ENCODE measurements at regions of chr4 and their contacts with region 1.

Region 1: DNA sequence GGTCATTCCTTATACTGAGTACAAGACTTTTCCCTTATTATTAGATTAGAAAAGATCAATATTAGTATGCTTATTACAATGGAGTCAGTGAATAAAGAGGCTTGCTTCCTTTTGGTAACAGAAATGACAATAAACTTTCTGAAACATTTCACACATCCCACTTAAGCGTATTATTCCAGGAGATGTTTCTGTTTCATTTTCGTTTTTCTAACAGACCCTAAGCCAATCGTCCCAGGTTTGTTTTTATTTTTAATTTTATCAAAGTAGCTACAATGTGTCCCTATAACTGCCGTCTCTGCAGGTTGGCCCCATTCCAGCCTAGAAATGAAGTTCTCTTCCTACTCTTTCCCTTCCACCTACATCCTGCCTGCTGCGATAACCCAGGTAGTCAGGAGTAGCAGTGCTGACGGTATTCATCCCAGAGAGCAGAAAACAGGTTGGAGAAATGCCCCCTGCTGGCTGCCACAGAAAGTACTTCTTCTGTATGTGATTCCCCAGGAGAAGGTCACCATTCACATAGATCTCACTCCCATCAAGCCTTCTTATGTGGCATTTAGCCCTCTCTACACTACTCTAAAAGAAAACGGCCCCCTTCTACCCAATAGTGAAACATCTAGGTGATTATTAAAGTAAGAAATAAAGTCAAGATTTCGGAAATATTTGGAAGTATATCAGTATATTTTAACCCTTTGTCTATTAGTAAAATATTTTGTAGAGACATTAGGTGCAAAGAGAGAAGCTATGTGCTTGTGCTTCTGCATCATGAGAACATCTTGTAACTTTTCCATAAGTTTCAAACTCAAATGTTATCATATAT is 40.4 kb downstream of the ENPEP start:
- DNase-seq: peak; percentile 75
- ATAC-seq: peak; percentile 84
- H3K4me3 ChIP-seq: peak overlapping the region; percentile 52 to 72 (median 70)
- H3K4me3 Mint-ChIP-seq: peak overlapping the region; percentile 91
- H3K27ac ChIP-seq: peak overlapping the region in 1 of 2 donors; percentile 50
- H3K27ac Mint-ChIP-seq: no peak overlapping the region
- H3K4me1 ChIP-seq: peaks cover 4 to 9% of the 10 kb centered on the region in 2 donors
- H3K4me1 Mint-ChIP-seq: peaks cover 9% of the 10 kb centered on the region
- H3K27me3 ChIP-seq: peaks cover 0 to 3% (median 0%) of the 10 kb centered on the region in 4 experiments
- H3K27me3 Mint-ChIP-seq: peaks cover under 1% of the 10 kb centered on the region
- CTCF ChIP-seq: peak; percentile 84

Region 2: GRCh38 chr4:109998867-109999584 is 517.3 kb before region 1 on chr4:
- CTCF ChIA-PET with region 1: interaction called, 270 read pairs
- POLR2A ChIA-PET with region 1: no interaction called
- intact Hi-C with region 1: loop called (anchors 1 kb)
- DNase-seq: peak; percentile 76
- ATAC-seq: peak; percentile 47
- H3K4me3 ChIP-seq: no peak overlapping the region
- H3K4me3 Mint-ChIP-seq: no peak overlapping the region
- H3K27ac ChIP-seq: no peak overlapping the region
- H3K27ac Mint-ChIP-seq: no peak overlapping the region
- H3K4me1 ChIP-seq: peaks cover 2 to 5% of the 10 kb centered on the region in 2 donors
- H3K4me1 Mint-ChIP-seq: peaks cover 11% of the 10 kb centered on the region
- H3K27me3 ChIP-seq: no peaks in the 10 kb centered on the region
- H3K27me3 Mint-ChIP-seq: peaks cover 10% of the 10 kb centered on the region
- CTCF ChIP-seq: peak; percentile 81

Region 3: GRCh38 chr4:110005461-110006056 is 510.8 kb before region 1 on chr4:
- CTCF ChIA-PET with region 1: interaction called, 270 read pairs
- POLR2A ChIA-PET with region 1: no interaction called
- intact Hi-C with region 1: loop called (anchors 1 kb)
- DNase-seq: peak; percentile 63
- ATAC-seq: no peak
- H3K4me3 ChIP-seq: no peak overlapping the region
- H3K4me3 Mint-ChIP-seq: no peak overlapping the region
- H3K27ac ChIP-seq: no peak overlapping the region
- H3K27ac Mint-ChIP-seq: no peak overlapping the region
- H3K4me1 ChIP-seq: no peaks in the 10 kb centered on the region
- H3K4me1 Mint-ChIP-seq: no peaks in the 10 kb centered on the region
- H3K27me3 ChIP-seq: no peaks in the 10 kb centered on the region
- H3K27me3 Mint-ChIP-seq: peaks cover 9% of the 10 kb centered on the region
- CTCF ChIP-seq: peak; percentile 86

Region 4: GRCh38 chr4:110049951-110050925 is 466.1 kb before region 1 on chr4:
- CTCF ChIA-PET with region 1: interaction called, 27 read pairs
- POLR2A ChIA-PET with region 1: no interaction called
- intact Hi-C with region 1: loop called (anchors 1 kb)
- DNase-seq: peak; percentile 56
- ATAC-seq: no peak
- H3K4me3 ChIP-seq: no peak overlapping the region
- H3K4me3 Mint-ChIP-seq: no peak overlapping the region
- H3K27ac ChIP-seq: no peak overlapping the region
- H3K27ac Mint-ChIP-seq: no peak overlapping the region
- H3K4me1 ChIP-seq: no peaks in the 10 kb centered on the region
- H3K4me1 Mint-ChIP-seq: no peaks in the 10 kb centered on the region
- H3K27me3 ChIP-seq: no peaks in the 10 kb centered on the region
- H3K27me3 Mint-ChIP-seq: no peaks in the 10 kb centered on the region
- CTCF ChIP-seq: peak; percentile 85

Region 5: GRCh38 chr4:110193822-110194761 is 322.2 kb before region 1 on chr4:
- CTCF ChIA-PET with region 1: interaction called, 3 read pairs
- POLR2A ChIA-PET with region 1: no interaction called
- intact Hi-C with region 1: loop called (anchors 10 kb)
- DNase-seq: peak; percentile 82
- ATAC-seq: peak; percentile 78
- H3K4me3 ChIP-seq: no peak overlapping the region
- H3K4me3 Mint-ChIP-seq: peak overlapping the region; percentile 4
- H3K27ac ChIP-seq: peak overlapping the region; percentile 1 to 71
- H3K27ac Mint-ChIP-seq: peak overlapping the region; percentile 68
- H3K4me1 ChIP-seq: peaks cover 16 to 17% of the 10 kb centered on the region in 2 donors
- H3K4me1 Mint-ChIP-seq: peaks cover 30% of the 10 kb centered on the region
- H3K27me3 ChIP-seq: no peaks in the 10 kb centered on the region
- H3K27me3 Mint-ChIP-seq: no peaks in the 10 kb centered on the region
- CTCF ChIP-seq: no peak

Region 6: DNA sequence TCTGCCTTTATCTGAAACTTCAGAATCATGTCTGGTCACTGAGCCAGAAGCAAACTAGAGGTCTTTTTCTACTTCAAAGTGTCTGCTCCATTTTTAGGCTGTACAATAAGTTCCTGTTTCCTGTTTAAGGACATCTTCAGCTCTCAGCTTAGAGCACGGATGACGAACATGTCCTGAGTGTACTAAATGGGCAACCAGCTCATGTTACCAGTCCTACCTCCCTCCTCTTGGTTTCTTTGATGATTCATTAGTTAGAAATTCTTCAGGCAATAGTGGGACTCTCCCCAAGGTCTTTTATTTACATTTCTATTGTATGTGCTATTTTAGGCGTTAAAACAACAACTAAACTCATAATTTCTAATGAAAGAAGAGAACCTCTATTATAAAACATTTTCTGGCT is 17.6 kb after region 1 on chr4:
- CTCF ChIA-PET with region 1: interaction called, 10 read pairs
- POLR2A ChIA-PET with region 1: interaction called, 3 read pairs
- intact Hi-C with region 1: no loop called
- DNase-seq: no peak
- ATAC-seq: no peak
- H3K4me3 ChIP-seq: no peak overlapping the region
- H3K4me3 Mint-ChIP-seq: no peak overlapping the region
- H3K27ac ChIP-seq: no peak overlapping the region
- H3K27ac Mint-ChIP-seq: no peak overlapping the region
- H3K4me1 ChIP-seq: no peaks in the 10 kb centered on the region
- H3K4me1 Mint-ChIP-seq: no peaks in the 10 kb centered on the region
- H3K27me3 ChIP-seq: no peaks in the 10 kb centered on the region
- H3K27me3 Mint-ChIP-seq: peaks cover 18% of the 10 kb centered on the region
- CTCF ChIP-seq: no peak

Region 7: DNA sequence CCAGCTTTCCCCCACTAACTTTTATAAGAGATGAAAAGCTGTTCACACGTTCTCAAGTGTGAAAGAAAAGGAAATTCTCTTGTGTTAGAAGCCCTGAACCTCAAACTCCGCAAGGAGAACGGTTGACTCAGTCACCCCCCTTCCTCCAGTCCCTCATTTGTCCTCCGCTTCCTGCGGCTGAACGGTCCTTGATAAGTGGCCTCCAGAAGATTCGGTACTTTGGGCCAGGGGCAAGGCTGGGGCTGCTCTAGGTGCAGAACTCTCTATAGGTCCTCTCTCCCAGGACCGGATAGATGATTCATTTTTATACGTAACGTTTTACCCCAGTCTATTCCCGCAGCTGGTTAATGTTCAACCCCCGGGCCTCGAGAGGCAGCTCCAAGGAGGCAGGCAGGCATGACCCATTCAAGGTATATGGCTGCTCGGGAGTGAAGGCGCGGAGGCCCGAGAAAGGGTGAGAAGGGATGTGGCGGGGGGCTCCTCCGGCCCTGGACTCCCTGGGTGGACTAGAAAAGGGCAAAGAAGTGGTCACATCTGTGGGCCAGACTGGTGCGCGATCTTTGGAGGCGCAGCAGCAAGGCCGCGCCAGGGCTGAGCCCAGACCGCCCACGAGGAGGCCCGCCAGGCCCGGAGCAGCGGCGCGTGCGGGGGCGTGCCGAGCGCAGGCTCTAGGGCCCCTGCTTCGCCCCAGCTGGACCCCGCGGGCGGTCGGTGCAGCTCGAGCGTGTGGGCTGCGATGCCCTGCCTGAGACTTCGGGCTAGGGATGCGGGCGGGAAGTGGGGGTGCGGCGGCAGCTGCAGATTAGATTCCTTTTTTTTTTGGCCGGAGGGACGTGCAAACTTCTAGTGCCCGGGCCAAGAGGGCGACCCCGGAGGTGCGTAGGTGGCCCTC is 94.9 kb after region 1 on chr4:
- CTCF ChIA-PET with region 1: no interaction called
- POLR2A ChIA-PET with region 1: no interaction called
- intact Hi-C with region 1: no loop called
- DNase-seq: no peak
- ATAC-seq: no peak
- H3K4me3 ChIP-seq: no peak overlapping the region
- H3K4me3 Mint-ChIP-seq: no peak overlapping the region
- H3K27ac ChIP-seq: no peak overlapping the region
- H3K27ac Mint-ChIP-seq: no peak overlapping the region
- H3K4me1 ChIP-seq: peaks cover 0 to 7% of the 10 kb centered on the region in 2 donors
- H3K4me1 Mint-ChIP-seq: no peaks in the 10 kb centered on the region
- H3K27me3 ChIP-seq: peaks cover 0 to 61% (median 52%) of the 10 kb centered on the region in 4 experiments
- H3K27me3 Mint-ChIP-seq: peaks cover 54% of the 10 kb centered on the region
- CTCF ChIP-seq: no peak

Region 8: GRCh38 chr4:112031712-112032328 is 1515.5 kb after region 1 on chr4:
- CTCF ChIA-PET with region 1: interaction called, 4 read pairs
- POLR2A ChIA-PET with region 1: no interaction called
- intact Hi-C with region 1: loop called (anchors 10 kb)
- DNase-seq: peak; percentile 30
- ATAC-seq: no peak
- H3K4me3 ChIP-seq: no peak overlapping the region
- H3K4me3 Mint-ChIP-seq: no peak overlapping the region
- H3K27ac ChIP-seq: no peak overlapping the region
- H3K27ac Mint-ChIP-seq: no peak overlapping the region
- H3K4me1 ChIP-seq: no peaks in the 10 kb centered on the region
- H3K4me1 Mint-ChIP-seq: no peaks in the 10 kb centered on the region
- H3K27me3 ChIP-seq: peaks cover 0 to 20% (median 5%) of the 10 kb centered on the region in 4 experiments
- H3K27me3 Mint-ChIP-seq: peaks cover 30% of the 10 kb centered on the region
- CTCF ChIP-seq: peak; percentile 51

Measured in B cell (primary cell).